B cell (primary cell): ENCODE measurements at regions of chr3 and their contacts with region 1.

Region 1: DNA sequence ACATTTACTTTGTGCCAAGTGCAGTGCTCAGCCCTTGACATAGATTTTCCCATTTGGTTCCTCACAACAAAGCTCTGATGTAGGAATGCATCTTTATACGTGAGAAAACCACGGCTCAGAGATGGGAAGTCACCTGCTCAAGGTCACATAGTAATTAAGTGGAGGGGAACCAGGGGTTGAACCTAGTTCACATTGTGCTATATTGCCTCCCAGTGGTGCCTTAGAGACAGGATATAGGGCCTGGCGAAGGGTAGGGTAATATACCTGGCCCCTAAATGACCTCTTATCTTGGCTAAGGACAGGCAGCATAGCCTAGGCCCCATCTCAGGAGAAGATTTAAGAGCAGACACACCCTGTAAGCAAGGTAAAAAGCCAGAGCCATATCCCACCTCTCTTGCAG is 71.5 kb downstream of the FOXP1 start:
- DNase-seq: peak; percentile 76
- ATAC-seq: peak; percentile 95
- H3K4me3 ChIP-seq: peak overlapping the region in 1 of 5 experiments; percentile 10
- H3K4me3 Mint-ChIP-seq: peak overlapping the region; percentile 66
- H3K27ac ChIP-seq: peak overlapping the region; percentile 17 to 74
- H3K27ac Mint-ChIP-seq: no peak overlapping the region
- H3K4me1 ChIP-seq: peaks cover 21 to 28% of the 10 kb centered on the region in 2 donors
- H3K4me1 Mint-ChIP-seq: peaks cover 29% of the 10 kb centered on the region
- H3K27me3 ChIP-seq: no peaks in the 10 kb centered on the region
- H3K27me3 Mint-ChIP-seq: no peaks in the 10 kb centered on the region
- CTCF ChIP-seq: peak; percentile 65

Region 2: GRCh38 chr3:71069797-71070196 is 442.2 kb before region 1 on chr3:
- CTCF ChIA-PET with region 1: interaction called, 4 read pairs
- POLR2A ChIA-PET with region 1: no interaction called
- intact Hi-C with region 1: loop called (anchors 5 kb)
- DNase-seq: peak; percentile 83
- ATAC-seq: peak; percentile 48
- H3K4me3 ChIP-seq: no peak overlapping the region
- H3K4me3 Mint-ChIP-seq: peak overlapping the region; percentile 69
- H3K27ac ChIP-seq: peak overlapping the region; percentile 25 to 77
- H3K27ac Mint-ChIP-seq: peak overlapping the region; percentile 84
- H3K4me1 ChIP-seq: peaks cover 55 to 67% of the 10 kb centered on the region in 2 donors
- H3K4me1 Mint-ChIP-seq: peaks cover 79% of the 10 kb centered on the region
- H3K27me3 ChIP-seq: no peaks in the 10 kb centered on the region
- H3K27me3 Mint-ChIP-seq: no peaks in the 10 kb centered on the region
- CTCF ChIP-seq: peak; percentile 78

Region 3: GRCh38 chr3:71305231-71306206 is 206.5 kb before region 1 on chr3:
- CTCF ChIA-PET with region 1: interaction called, 7 read pairs
- POLR2A ChIA-PET with region 1: no interaction called
- intact Hi-C with region 1: loop called (anchors 2 kb)
- DNase-seq: peak; percentile 49
- ATAC-seq: peak; percentile 60
- H3K4me3 ChIP-seq: peak overlapping the region; percentile 50 to 85 (median 67)
- H3K4me3 Mint-ChIP-seq: peak overlapping the region; percentile 88
- H3K27ac ChIP-seq: peak overlapping the region; percentile 70 to 84
- H3K27ac Mint-ChIP-seq: peak overlapping the region; percentile 94
- H3K4me1 ChIP-seq: peaks cover 47 to 57% of the 10 kb centered on the region in 2 donors
- H3K4me1 Mint-ChIP-seq: peaks cover 77% of the 10 kb centered on the region
- H3K27me3 ChIP-seq: no peaks in the 10 kb centered on the region
- H3K27me3 Mint-ChIP-seq: no peaks in the 10 kb centered on the region
- CTCF ChIP-seq: no peak

Region 4: DNA sequence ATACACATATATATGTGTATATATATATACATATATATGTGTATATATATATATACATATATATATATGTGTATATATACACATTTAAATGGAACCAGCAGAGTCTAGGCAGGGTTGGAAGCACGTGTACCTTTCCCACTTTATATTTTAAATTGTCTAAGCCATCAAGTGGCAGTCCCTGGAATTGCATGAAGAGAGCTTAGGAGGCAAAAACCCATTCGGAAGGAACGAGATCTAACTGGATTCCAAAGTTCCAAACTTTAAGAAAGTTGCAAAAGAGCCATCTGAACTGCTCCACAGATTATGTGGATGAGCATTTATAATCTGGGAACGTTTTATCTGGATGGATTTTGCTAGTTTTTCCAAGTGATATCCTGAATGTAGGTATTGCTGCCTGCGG is 115.0 kb before region 1 on chr3:
- CTCF ChIA-PET with region 1: interaction called, 5 read pairs
- POLR2A ChIA-PET with region 1: interaction called, 3 read pairs
- intact Hi-C with region 1: loop called (anchors 5 kb)
- DNase-seq: peak; percentile 47
- ATAC-seq: no peak
- H3K4me3 ChIP-seq: no peak overlapping the region
- H3K4me3 Mint-ChIP-seq: peak overlapping the region; percentile 62
- H3K27ac ChIP-seq: peak overlapping the region; percentile 58 to 82
- H3K27ac Mint-ChIP-seq: no peak overlapping the region
- H3K4me1 ChIP-seq: peaks cover 69 to 88% of the 10 kb centered on the region in 2 donors
- H3K4me1 Mint-ChIP-seq: peaks cover 77% of the 10 kb centered on the region
- H3K27me3 ChIP-seq: no peaks in the 10 kb centered on the region
- H3K27me3 Mint-ChIP-seq: no peaks in the 10 kb centered on the region
- CTCF ChIP-seq: peak; percentile 44

Region 5: GRCh38 chr3:71456156-71456555 is 55.8 kb before region 1 on chr3:
- CTCF ChIA-PET with region 1: interaction called, 8 read pairs
- POLR2A ChIA-PET with region 1: no interaction called
- intact Hi-C with region 1: loop called (anchors 2 kb)
- DNase-seq: peak; percentile 62
- ATAC-seq: peak; percentile 54
- H3K4me3 ChIP-seq: peak overlapping the region; percentile 9 to 53 (median 48)
- H3K4me3 Mint-ChIP-seq: peak overlapping the region; percentile 83
- H3K27ac ChIP-seq: peak overlapping the region; percentile 80 to 86
- H3K27ac Mint-ChIP-seq: peak overlapping the region; percentile 94
- H3K4me1 ChIP-seq: peaks cover 70 to 77% of the 10 kb centered on the region in 2 donors
- H3K4me1 Mint-ChIP-seq: peaks cover 76% of the 10 kb centered on the region
- H3K27me3 ChIP-seq: no peaks in the 10 kb centered on the region
- H3K27me3 Mint-ChIP-seq: no peaks in the 10 kb centered on the region
- CTCF ChIP-seq: peak; percentile 20